Heart left ventricle (tissue), 16 donors: ENCODE measurements at regions of chr11 and their contacts with region 1.

Region 1: DNA sequence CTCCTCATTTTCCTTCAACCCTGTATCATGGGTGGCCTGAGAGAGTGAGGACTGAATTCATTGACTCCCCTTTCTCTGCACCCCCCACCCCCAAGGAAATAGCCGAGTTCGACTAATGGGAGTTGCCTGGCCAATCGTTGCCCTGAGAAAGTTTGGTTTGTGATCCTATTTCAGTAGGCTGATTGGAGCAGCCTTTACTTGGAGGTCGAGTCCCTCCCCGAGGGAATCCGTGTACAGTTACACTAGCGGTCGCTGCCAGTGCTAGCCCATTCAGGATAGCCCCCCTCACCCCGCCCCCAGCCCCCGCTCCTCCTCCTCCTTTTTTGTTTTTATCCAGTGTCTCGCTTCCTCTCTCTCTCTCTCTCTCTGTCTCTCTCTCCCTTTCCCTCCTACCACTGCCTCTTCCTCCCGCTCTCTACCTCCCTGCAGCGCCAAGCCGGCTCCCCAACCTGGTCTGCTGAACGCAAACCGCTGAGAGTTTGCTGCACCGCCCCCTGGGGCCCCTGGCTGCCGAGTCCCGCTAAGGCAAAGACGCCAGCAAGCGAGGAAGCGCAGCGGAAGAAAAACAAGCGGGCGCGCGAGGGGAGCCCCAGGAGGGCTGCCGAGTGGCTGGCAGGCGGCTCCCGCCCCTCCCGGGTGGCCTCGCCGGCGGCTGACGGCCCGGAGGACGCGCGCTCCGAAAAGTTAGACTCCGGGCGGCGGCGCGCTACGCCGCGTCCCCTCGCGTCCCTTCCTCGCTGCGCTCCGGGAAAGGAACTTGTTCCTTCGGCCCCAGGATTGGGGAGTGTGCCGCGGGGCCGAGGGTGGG is at the start of gene GRAMD1B:
- DNase-seq: peak; percentile 53 to 85 (median 61)
- ATAC-seq: peak; percentile 33 to 62 (median 58)
- H3K4me3 ChIP-seq: peak within 1 kb of the TSS; percentile 25 to 78 (median 64)
- H3K27ac ChIP-seq: peak within 1 kb of the TSS in 11 of 12 donors; percentile 22 to 88 (median 73)
- H3K4me1 ChIP-seq: peaks cover 0 to 38% (median 9%) of the 10 kb centered on the region in 12 donors
- H3K27me3 ChIP-seq: peaks cover 0 to 10% (median 3%) of the 10 kb centered on the region in 9 donors
- CTCF ChIP-seq: peak in 2 of 12 donors; percentile 8 to 11
- POLR2A ChIP-seq: no peak
- total RNA-seq, gene GRAMD1B: 12.7 to 42.5 (median 23.0) TPM

Region 2: DNA sequence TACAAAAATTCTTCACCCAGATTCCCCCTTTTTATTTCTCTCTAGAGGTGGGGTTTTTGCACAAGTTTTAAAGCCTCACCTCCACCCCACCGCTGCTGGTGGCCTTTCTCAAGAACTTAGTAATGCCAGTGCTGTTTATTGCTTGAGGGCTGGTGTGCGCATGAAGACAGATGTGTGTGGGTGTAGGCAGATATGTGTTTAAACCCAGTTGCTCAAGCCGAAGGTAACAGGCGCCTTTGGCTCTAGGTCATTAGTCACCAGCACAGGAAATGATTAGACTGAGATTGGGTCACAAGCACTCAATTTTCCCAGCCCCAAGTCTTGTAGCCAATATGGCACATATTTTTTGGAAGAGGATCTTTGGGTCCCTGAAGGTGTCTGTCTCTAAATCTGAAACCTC is 232.4 kb before region 1 on chr11:
- intact Hi-C with region 1: no loop called
- DNase-seq: no peak
- ATAC-seq: no peak
- H3K4me3 ChIP-seq: no peak overlapping the region
- H3K27ac ChIP-seq: no peak overlapping the region
- H3K4me1 ChIP-seq: peaks cover 0 to 18% (median 10%) of the 10 kb centered on the region in 12 donors
- H3K27me3 ChIP-seq: peaks cover 6 to 75% (median 27%) of the 10 kb centered on the region in 9 donors
- CTCF ChIP-seq: no peak
- POLR2A ChIP-seq: no peak

Region 3: DNA sequence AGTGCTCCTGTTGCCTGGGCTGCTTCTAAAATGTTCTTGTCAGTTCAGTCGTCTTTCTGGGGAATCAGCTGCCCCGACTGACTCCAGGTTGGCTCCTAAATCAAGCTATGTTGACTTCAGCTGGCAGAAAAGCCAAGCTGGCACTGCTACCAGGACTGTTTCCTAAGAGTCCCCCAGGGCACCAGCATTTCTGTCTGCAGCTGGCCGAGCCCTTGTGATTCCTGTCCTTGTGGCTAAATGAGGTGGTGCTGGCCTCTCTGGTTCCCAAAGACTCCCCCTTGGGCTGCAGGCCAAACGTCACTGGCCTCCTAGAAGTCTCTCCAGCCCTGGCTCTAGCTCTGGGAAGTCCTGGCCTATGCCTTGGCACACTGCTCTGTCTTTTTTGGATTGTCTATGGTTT is 31.0 kb after region 1 on chr11:
- intact Hi-C with region 1: loop called in 1 of 10 experiments (anchors 5 kb)
- DNase-seq: peak; percentile 54 to 90 (median 79)
- ATAC-seq: peak; percentile 77 to 86 (median 84)
- H3K4me3 ChIP-seq: no peak overlapping the region
- H3K27ac ChIP-seq: peak overlapping the region; percentile 55 to 94 (median 78)
- H3K4me1 ChIP-seq: peaks cover 0 to 30% (median 12%) of the 10 kb centered on the region in 12 donors
- H3K27me3 ChIP-seq: no peaks in the 10 kb centered on the region
- CTCF ChIP-seq: peak in 1 of 12 donors; percentile 42
- POLR2A ChIP-seq: no peak